Right cardiac atrium (tissue), 5 donors: ENCODE measurements at regions of chr15 and their contacts with region 1.

Region 1: GRCh38 chr15:89982315-89983055 is 18.6 kb upstream of the ZNF710 start:
- DNase-seq: no peak
- ATAC-seq: no peak
- H3K4me3 ChIP-seq: no peak overlapping the region
- H3K27ac ChIP-seq: no peak overlapping the region
- H3K4me1 ChIP-seq: no peaks in the 10 kb centered on the region
- H3K27me3 ChIP-seq: no peaks in the 10 kb centered on the region

Region 2: GRCh38 chr15:89857673-89858072 is 124.8 kb before region 1 on chr15:
- intact Hi-C with region 1: no loop called
- DNase-seq: no peak
- ATAC-seq: peak in 1 of 2 donors; percentile 26
- H3K4me3 ChIP-seq: no peak overlapping the region
- H3K27ac ChIP-seq: no peak overlapping the region
- H3K4me1 ChIP-seq: no peaks in the 10 kb centered on the region
- H3K27me3 ChIP-seq: no peaks in the 10 kb centered on the region

Region 3: DNA sequence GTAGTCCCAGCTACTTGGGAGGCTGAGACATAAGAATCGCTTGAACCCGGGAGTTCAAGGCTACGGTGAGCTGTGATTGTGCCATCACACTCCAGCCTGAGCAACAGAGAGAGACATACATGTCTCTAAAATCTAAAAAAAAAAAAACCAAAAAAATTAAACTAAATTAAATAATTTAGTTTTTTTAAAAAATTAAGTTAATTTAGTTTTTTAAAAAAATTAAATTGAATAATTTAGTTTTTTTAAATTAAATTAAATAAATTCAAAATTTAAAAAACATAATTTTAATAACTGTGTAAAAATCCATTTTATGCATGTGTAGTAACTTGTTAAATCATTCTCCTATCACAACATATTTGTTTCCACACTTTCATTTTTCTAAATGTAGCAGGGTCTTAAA is 49.6 kb before region 1 on chr15:
- intact Hi-C with region 1: loop called in 1 of 4 experiments (anchors 5 kb)
- DNase-seq: no peak
- ATAC-seq: no peak
- H3K4me3 ChIP-seq: no peak overlapping the region
- H3K27ac ChIP-seq: no peak overlapping the region
- H3K4me1 ChIP-seq: no peaks in the 10 kb centered on the region
- H3K27me3 ChIP-seq: no peaks in the 10 kb centered on the region

Region 4: DNA sequence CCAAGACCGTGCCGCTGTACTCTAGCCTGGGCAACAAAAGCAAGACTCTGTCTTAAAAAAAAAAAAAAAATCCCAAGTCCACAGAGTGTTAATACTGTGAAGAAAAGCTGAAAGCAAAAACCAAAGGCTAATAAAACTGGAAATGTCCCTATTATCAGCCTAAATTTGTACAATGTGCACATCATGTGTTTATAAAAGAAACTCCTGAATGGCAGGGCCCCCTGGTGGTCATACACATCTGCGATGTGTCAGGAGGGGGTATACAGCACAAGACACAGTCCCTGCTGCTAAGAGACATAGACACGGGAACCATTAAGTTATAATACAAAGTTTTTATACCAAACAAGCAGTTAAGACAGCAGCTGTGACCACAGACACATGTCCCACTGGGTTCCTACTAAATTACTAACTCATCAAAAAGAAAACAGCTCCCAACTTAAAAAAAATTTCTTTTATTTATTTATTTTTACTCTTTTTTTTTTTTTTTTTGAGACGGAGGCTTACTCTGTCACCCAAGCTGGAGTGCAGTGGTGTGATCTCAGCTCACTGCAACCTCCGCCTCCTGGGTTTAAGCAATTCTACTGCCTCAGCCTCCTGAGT is 88.8 kb after region 1 on chr15:
- intact Hi-C with region 1: no loop called
- DNase-seq: peak; percentile 85 to 95 (median 88)
- ATAC-seq: peak; percentile 75 to 78
- H3K4me3 ChIP-seq: no peak overlapping the region
- H3K27ac ChIP-seq: no peak overlapping the region
- H3K4me1 ChIP-seq: no peaks in the 10 kb centered on the region
- H3K27me3 ChIP-seq: no peaks in the 10 kb centered on the region